AG04450 (cell line): ENCODE measurements at regions of chr19 and their contacts with region 1.

Region 1: GRCh38 chr19:44903602-44904425 is 1.8 kb upstream of the APOE start:
- DNase-seq: no peak
- H3K4me3 ChIP-seq: no peak overlapping the region
- H3K27ac ChIP-seq: no peak overlapping the region
- H3K27me3 ChIP-seq: peaks cover 9% of the 10 kb centered on the region
- CTCF ChIP-seq: peak; percentile 98

Region 2: GRCh38 chr19:44662691-44663385 is 241.0 kb before region 1 on chr19:
- CTCF ChIA-PET with region 1: interaction called, 13 read pairs
- POLR2A ChIA-PET with region 1: no interaction called
- DNase-seq: no peak
- H3K4me3 ChIP-seq: no peak overlapping the region
- H3K27ac ChIP-seq: peak overlapping the region; percentile 11
- H3K27me3 ChIP-seq: no peaks in the 10 kb centered on the region
- CTCF ChIP-seq: no peak

Region 3: DNA sequence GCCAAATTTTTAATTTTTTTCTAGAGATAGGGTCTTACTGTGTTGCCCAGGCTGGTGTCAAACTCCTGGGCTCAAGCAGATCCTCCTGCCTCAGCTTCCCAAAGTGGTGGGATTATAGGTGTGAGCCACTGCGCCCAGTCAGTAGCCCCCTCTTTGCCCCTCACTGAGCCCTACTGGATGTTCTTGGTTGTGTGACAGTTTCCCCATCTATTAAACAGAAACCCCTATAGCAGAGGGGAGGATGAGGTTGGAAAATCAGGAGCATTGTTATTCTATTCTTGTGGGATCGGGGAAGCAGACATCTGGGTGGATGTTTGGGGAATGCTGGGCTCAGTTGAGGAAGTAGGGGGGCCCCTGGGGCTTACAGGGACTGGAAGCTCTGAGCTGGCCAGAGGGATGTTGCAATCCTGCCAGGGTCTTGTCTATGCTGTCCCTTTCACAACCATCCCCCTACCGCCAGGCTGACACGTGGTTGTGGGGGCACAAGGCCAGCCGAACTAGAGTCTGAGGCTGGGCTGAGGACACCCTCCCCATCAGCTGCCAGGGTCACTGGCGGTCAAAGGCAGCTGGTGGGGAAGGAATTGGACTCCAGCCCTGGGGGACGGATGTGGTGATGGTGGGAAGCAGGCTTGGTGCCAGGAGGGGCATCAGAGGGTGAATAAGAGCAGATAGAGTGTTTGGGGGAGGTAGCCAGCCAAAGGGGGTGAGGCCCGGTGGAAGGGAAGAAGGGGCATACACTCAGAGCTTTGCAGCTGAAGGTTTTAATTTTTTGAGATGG is 21.5 kb after region 1 on chr19:
- CTCF ChIA-PET with region 1: interaction called, 10 read pairs
- POLR2A ChIA-PET with region 1: no interaction called
- DNase-seq: no peak
- H3K4me3 ChIP-seq: no peak overlapping the region
- H3K27ac ChIP-seq: no peak overlapping the region
- H3K27me3 ChIP-seq: no peaks in the 10 kb centered on the region
- CTCF ChIP-seq: no peak

Region 4: GRCh38 chr19:44954824-44955586 is 51.2 kb after region 1 on chr19 and contains the start of gene CLPTM1:
- CTCF ChIA-PET with region 1: interaction called, 101 read pairs
- POLR2A ChIA-PET with region 1: interaction called, 3 read pairs
- DNase-seq: peak; percentile 95
- H3K4me3 ChIP-seq: peak within 1 kb of the TSS; percentile 97
- H3K27ac ChIP-seq: peak within 1 kb of the TSS; percentile 95
- H3K27me3 ChIP-seq: no peaks in the 10 kb centered on the region
- CTCF ChIP-seq: no peak
- polyA plus RNA-seq, gene CLPTM1: 51.5 and 63.1 TPM in 2 replicates